Common myeloid progenitor, CD34-positive (primary cell): ENCODE measurements at regions of chr11 and their contacts with region 1.

Region 1: DNA sequence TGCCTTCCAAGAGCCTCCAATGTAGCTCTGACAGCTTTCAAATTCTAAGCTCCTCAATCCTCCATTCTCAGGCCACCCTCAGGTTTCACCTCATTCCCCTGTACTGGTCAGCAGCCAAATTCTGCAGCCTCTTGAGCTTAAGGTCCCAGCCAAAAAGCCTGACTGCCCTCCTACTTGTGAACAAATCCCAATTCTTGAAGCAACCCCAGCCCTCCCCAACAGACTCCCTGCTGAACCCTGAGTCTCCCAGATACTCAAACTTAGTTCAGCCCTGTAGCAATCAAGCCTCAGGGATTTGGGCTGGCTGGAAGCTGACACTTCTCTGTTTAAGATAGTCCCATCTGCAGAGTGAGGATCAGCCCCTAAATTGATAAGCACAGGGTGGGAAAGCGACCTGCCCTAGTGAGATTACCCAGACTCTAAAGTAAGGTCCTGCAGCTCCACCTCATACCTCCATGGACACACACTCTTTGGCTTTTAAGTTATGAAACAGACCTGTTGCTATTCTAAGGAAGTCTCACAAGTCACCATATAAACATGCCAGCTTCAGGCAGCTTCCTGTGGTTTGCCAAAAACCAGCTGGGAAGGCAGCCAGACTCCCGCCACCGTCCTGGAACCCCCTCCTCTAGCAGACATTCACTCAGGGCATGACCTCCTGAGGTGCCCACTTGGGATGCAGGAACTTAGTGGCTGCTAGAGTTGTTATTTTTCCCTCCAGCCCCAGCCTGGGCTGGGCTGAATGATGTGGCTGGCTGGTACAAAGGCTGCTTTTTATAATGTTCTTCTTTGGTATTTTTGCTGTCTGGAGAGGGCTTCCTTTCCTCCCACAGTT is 82.5 kb upstream of the PICALM start:
- DNase-seq: peak; percentile 32 to 85 (median 84)
- H3K4me3 ChIP-seq: peak overlapping the region in 4 of 7 experiments; percentile 5 to 52 (median 23)
- H3K27ac ChIP-seq: peak overlapping the region; percentile 27 to 60
- H3K4me1 ChIP-seq: peaks cover 15 to 59% (median 37%) of the 10 kb centered on the region in 4 experiments
- H3K27me3 ChIP-seq: no peaks in the 10 kb centered on the region

Region 2: DNA sequence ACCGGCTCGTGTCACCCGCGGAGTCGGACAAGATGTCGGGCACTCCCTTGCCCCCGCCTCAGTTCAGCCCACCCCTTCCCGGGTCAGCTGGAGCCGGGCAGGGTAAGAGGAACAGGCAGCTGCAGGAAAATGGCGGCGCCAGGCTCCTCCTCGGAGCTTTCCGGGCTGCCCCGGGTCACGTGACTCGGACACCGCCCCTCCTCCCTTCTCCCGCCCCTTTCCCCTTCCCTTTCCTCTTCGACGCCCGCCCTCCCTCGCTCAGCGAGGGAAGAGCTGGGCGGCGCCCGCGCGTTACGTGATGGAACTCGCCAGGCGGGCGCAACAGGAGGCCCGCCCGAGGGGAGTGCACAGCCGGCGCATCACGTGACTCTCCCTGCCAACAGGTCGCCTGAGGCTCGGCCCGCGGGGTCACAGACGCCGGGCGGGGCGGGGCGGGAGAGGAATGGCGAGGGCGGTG is 82.4 kb before region 1 on chr11 and contains the start of gene PICALM:
- CTCF ChIA-PET with region 1: interaction called, 14 read pairs
- POLR2A ChIA-PET with region 1: interaction called, 4 read pairs
- DNase-seq: peak; percentile 99 to 100 (median 100)
- H3K4me3 ChIP-seq: peak within 1 kb of the TSS; percentile 86 to 100 (median 97)
- H3K27ac ChIP-seq: peak within 1 kb of the TSS; percentile 88 to 96
- H3K4me1 ChIP-seq: peaks cover 14 to 40% (median 33%) of the 10 kb centered on the region in 4 experiments
- H3K27me3 ChIP-seq: no peaks in the 10 kb centered on the region